PC-3 (cell line): ENCODE measurements at regions of chr2 and their contacts with region 1.

Region 1: DNA sequence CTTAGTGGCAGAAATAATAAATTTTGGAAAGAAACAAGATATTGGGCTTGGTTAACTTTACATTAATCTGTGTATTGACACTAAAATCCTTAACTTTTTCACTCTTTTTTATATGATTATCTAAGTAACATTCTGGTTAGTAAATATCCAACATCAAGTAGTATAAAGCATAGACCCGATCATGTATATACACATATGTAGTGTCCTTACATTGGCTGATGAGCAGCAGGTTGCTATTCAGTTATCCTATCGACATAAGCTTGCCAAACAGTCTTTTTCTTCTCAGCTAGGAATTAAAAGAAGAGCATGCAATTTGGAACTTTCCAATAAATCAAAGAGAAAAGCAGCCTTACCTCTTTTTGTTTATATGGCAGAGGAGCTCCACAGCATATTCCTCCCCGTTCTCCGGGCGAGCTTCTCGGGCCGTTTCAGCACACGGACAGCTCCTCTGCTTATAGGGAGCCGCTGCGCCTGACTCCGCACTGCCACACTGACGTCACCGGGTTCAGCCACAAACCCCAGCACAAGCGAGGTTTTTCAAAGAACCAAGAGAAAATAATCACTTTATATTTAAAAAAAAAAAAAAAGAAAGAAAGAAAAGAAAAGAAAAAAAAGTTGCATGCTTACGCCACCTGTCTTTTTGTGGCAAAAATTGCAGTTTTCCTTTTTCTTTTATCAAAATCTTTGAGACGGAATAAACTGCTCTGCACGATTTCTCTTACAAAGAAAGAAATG is at the start of gene SCG2:
- DNase-seq: peak; percentile 74
- ATAC-seq: peak; percentile 98
- H3K4me3 ChIP-seq: no peak within 1 kb of the TSS
- H3K27ac ChIP-seq: no peak within 1 kb of the TSS
- H3K4me1 ChIP-seq: peaks cover 14% of the 10 kb centered on the region
- H3K27me3 ChIP-seq: no peaks in the 10 kb centered on the region
- CTCF ChIP-seq: peak; percentile 33
- total RNA-seq, gene SCG2: 0.51 and 0.98 TPM in 2 replicates

Region 2: GRCh38 chr2:222976521-222977076 is 625.5 kb before region 1 on chr2:
- CTCF ChIA-PET with region 1: no interaction called
- POLR2A ChIA-PET with region 1: no interaction called
- intact Hi-C with region 1: loop called (anchors 10 kb)
- DNase-seq: no peak
- ATAC-seq: no peak
- H3K4me3 ChIP-seq: no peak overlapping the region
- H3K27ac ChIP-seq: no peak overlapping the region
- H3K4me1 ChIP-seq: peaks cover 19% of the 10 kb centered on the region
- H3K27me3 ChIP-seq: no peaks in the 10 kb centered on the region
- CTCF ChIP-seq: no peak

Region 3: DNA sequence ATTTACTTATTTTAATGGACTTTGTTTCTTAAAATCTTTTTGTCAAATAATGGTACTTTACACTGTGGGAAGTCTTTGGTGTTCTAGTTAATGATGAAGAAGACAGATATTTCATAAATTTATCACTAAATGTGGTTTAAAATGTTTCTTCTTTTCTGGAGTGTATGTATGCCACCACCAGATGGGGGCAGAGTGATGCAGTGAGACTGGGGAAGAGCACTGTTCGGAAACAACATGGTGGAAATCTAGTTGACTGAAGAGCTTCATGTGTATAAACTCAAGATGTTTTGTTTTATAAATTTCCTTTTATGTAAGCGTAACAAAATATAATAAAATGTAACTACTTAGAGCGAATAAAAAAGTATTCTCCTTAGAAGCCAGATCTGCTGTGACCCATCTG is 355.0 kb before region 1 on chr2:
- CTCF ChIA-PET with region 1: interaction called, 3 read pairs
- POLR2A ChIA-PET with region 1: no interaction called
- intact Hi-C with region 1: loop called (anchors 5 kb)
- DNase-seq: peak; percentile 50
- ATAC-seq: peak; percentile 53
- H3K4me3 ChIP-seq: no peak overlapping the region
- H3K27ac ChIP-seq: no peak overlapping the region
- H3K4me1 ChIP-seq: no peaks in the 10 kb centered on the region
- H3K27me3 ChIP-seq: peaks cover 3% of the 10 kb centered on the region; the same call in 1 of the 2 replicates
- CTCF ChIP-seq: peak; percentile 78

Region 4: DNA sequence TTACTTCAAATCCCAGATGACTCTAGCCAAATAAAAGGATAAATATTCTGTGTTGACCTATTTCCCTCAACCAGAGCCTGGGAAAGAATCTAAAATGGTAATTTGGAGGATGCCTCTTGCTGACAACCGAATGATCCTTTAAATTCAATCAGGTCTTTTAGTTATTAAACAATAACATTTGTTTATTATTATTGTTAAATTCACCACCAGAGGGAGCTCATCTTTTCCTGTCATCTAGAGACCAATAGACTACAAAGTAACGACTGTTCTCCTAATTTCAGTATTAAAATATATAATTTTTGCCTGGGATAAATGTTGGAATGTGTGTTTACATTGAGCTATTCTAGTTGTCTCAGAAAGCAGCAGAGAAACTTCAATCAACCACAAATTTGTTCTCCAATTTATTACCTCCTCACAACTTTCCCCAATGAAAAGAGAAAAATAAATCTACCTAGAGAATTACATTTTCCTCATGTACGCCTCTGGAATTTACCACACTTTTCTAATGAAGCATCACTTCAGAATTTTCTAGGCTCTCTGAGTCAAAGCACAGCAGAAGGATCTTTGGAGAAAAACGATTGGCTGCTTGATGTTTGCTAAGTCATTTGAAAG is 142.7 kb before region 1 on chr2:
- CTCF ChIA-PET with region 1: interaction called, 3 read pairs
- POLR2A ChIA-PET with region 1: no interaction called
- intact Hi-C with region 1: loop called (anchors 1 kb)
- DNase-seq: peak; percentile 62
- ATAC-seq: no peak
- H3K4me3 ChIP-seq: no peak overlapping the region
- H3K27ac ChIP-seq: no peak overlapping the region
- H3K4me1 ChIP-seq: peaks cover 27% of the 10 kb centered on the region
- H3K27me3 ChIP-seq: no peaks in the 10 kb centered on the region
- CTCF ChIP-seq: peak; percentile 66

Region 5: DNA sequence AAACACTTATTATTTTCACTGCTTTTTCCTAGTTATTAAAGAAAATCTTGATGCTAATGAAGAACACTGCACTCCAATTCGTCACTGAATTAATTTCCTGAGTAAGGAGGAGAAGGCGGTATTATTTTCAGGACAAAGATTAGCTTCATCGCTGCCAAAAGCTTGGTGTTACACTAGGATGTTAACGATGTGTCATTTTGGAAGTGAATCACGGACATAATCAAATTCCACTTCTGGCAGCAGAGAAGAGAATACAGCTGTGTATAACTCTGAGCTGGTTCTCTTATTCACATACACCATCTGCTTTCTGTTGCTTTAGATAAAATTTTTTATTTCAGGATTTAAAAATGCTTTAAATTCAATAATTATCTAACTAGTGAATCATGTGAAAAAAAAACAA is 74.1 kb before region 1 on chr2:
- CTCF ChIA-PET with region 1: interaction called, 3 read pairs
- POLR2A ChIA-PET with region 1: no interaction called
- intact Hi-C with region 1: loop called (anchors 5 kb)
- DNase-seq: peak; percentile 52
- ATAC-seq: peak; percentile 74
- H3K4me3 ChIP-seq: no peak overlapping the region
- H3K27ac ChIP-seq: no peak overlapping the region
- H3K4me1 ChIP-seq: peaks cover 4% of the 10 kb centered on the region; the same call in 1 of the 2 replicates
- H3K27me3 ChIP-seq: no peaks in the 10 kb centered on the region
- CTCF ChIP-seq: no peak

Region 6: DNA sequence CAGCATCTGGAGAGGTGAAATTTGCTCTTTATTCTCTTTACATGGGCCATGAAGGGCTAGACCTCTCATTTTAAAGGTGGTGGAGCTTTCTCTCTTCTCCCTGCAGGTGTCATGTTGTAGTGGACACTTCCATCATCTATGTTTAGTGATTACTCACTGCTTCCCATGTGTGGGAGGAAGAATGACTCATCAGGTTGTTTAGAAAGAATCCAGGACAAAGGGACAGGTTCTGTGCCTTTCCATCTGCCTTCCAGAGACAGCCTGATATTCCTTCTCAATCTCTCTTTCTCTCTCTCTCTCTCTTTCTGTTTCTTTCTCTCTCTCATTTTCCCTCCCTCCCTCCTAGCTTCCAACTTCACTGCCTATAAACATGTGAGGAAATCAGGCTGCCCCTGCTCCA is 38.6 kb before region 1 on chr2:
- CTCF ChIA-PET with region 1: no interaction called
- POLR2A ChIA-PET with region 1: interaction called, 26 read pairs
- intact Hi-C with region 1: loop called (anchors 5 kb)
- DNase-seq: peak; percentile 96
- ATAC-seq: peak; percentile 93
- H3K4me3 ChIP-seq: peak overlapping the region; percentile 55; the same call in 1 of the 2 replicates
- H3K27ac ChIP-seq: peak overlapping the region; percentile 87
- H3K4me1 ChIP-seq: peaks cover 42% of the 10 kb centered on the region
- H3K27me3 ChIP-seq: no peaks in the 10 kb centered on the region
- CTCF ChIP-seq: 0 out of 2 replicates have a peak, but pooled peaks have one; percentile 24